GM13977 (cell line): ENCODE measurements at regions of chr17 and their contacts with region 1.

Region 1: GRCh38 chr17:76264755-76265596 is at the start of gene UBALD2:
- DNase-seq: peak; percentile 98
- CTCF ChIP-seq: no peak

Region 2: DNA sequence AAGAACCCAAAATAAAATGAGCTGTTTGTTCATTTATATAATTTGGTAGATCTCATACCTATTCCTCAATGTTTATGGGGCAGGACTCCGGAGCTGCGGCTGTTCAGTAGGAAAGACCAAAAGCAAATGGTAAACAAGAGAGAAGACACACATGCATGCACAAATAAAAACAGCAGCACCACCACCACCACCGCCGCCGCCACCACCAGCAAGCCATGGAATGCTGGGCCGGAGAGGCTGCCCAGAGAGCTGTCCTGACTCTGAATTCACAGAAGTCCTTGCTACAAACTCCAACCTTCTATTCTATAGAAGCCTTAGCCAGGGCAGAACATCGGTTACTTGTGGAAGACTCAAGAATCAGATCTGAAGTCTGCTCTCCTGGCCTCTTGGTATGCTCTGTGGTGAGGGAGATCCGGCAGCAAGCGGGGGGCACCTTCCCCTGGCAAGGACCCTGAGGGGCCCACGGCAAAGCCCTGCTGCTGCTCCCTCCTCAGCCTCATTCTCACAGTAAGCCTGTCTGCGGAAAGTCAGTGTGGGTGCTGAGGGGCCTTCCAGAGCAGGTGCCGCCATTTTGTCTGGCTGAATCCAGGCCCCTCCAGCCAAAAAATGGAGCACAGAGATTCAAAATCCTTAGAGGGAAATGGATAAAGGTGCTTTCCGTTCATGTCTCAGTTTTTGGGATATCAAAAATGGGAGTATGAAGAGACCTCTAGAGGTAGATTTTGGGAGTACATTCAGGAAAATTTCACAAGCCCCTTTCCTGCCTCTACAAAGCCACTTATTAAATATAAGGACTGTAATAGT is 117.6 kb before region 1 on chr17:
- in situ Hi-C with region 1: no loop called
- DNase-seq: no peak
- CTCF ChIP-seq: no peak

Region 3: GRCh38 chr17:76188213-76189015 is 76.6 kb before region 1 on chr17:
- in situ Hi-C with region 1: loop called (anchors 5 kb)
- DNase-seq: no peak
- CTCF ChIP-seq: no peak